ENCODE measurements at regions of chr4 and their contacts with region 1.

Region 1: DNA sequence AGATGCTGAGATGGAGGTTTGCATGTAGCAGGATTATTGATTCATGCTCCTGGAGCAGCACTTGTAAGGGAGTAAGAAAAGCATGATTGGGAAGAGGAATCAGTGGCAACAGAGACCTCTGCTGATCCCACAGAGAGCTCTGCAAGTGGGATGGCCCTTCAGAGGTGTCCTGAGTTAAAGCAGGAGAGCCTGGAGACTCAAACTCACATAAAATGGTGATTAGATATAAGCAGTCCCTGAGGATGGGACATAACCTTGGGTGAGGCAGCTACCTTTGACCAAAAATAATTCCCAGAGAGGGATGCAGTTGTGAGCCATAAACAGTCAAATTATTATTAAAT is 25.4 kb upstream of the BMPR1B start:
- DNase-seq: no peak
- ATAC-seq: no peak
- H3K4me3 ChIP-seq: no peak overlapping the region
- H3K27ac ChIP-seq: no peak overlapping the region
- H3K4me1 ChIP-seq: no peaks in the 10 kb centered on the region
- H3K27me3 ChIP-seq: no peaks in the 10 kb centered on the region

Region 2: DNA sequence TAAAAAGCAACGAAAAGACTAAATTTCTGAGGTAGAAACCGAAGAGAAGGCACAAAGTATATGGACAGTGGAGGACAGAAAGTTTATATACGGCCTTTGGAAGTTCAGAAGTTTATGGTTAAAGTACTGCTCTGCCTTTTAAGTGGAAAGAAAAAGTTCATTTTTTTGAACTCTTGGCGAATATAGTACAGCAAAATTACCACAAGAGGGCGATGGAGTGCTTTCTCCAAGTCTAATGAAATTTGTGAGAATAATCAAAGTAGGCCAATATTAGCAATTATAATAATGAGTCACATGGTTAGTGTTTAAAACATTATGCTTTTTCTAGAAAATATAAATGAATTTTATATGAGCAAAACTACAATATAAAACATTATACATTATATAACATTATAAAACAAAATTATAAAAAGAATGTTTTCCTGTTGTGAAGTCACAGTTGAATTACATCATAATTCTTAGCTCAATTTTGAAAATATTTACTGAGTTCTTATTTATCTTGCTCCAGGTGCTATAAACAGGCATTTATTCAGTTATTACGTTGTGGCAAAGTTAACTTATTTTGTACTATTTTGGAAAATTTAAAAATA is 110.7 kb before region 1 on chr4:
- intact Hi-C with region 1: loop called in 1 of 2 experiments (anchors 5 kb)
- DNase-seq: no peak
- ATAC-seq: no peak
- H3K4me3 ChIP-seq: no peak overlapping the region
- H3K27ac ChIP-seq: no peak overlapping the region
- H3K4me1 ChIP-seq: no peaks in the 10 kb centered on the region
- H3K27me3 ChIP-seq: no peaks in the 10 kb centered on the region

Region 3: DNA sequence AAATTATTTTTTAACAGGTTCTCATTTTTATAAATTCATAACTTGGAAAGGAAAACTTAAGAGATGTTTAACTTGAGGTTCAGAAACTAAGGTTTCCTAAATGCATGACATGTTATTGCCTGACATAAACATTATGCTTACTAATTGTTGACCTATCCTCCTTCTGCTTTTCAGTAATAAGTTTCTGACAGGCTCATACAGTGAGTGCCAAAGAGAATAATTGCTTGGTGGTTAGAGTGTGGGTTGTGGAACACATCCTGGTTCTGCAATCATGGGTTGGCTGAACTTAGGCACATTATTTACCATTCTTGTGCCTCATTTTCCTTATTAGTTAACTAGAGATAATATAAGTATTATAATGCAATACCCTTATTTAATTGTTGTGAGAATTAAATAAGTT is 81.9 kb after region 1 on chr4:
- intact Hi-C with region 1: no loop called
- DNase-seq: no peak
- ATAC-seq: no peak
- H3K4me3 ChIP-seq: no peak overlapping the region
- H3K27ac ChIP-seq: no peak overlapping the region
- H3K4me1 ChIP-seq: peaks cover 2 to 5% of the 10 kb centered on the region in 2 donors
- H3K27me3 ChIP-seq: no peaks in the 10 kb centered on the region

Region 4: GRCh38 chr4:94852332-94853015 is 120.1 kb after region 1 on chr4:
- intact Hi-C with region 1: no loop called
- DNase-seq: no peak
- ATAC-seq: no peak
- H3K4me3 ChIP-seq: no peak overlapping the region
- H3K27ac ChIP-seq: no peak overlapping the region
- H3K4me1 ChIP-seq: peaks cover 0 to 2% of the 10 kb centered on the region in 2 donors
- H3K27me3 ChIP-seq: no peaks in the 10 kb centered on the region

Region 5: DNA sequence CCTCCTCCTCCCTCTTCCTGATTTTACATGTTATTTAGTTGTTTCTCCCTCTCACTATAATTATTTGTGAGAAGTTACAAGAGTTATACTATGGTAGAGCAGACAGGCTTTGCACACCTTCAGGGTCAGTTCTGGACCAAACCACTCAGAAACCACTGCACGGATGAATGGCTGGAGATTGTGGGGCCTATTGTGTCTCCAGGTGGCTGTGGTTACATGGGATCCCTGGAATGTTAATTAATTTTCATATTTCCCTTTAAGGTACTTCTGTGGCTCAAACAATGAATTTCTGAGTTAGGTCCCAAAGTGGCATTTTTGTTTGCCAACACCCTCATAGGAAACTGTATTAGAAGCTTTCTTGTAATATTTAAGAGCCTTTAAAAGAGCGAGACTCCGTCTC is 177.3 kb after region 1 on chr4:
- intact Hi-C with region 1: no loop called
- DNase-seq: no peak
- ATAC-seq: no peak
- H3K4me3 ChIP-seq: no peak overlapping the region
- H3K27ac ChIP-seq: no peak overlapping the region
- H3K4me1 ChIP-seq: no peaks in the 10 kb centered on the region
- H3K27me3 ChIP-seq: no peaks in the 10 kb centered on the region

Measured in aorta (tissue), 5 donors.